ENCODE measurements at regions of chr10 and their contacts with region 1.

Region 1: GRCh38 chr10:5813287-5814109 is at the start of gene GDI2:
- DNase-seq: peak; percentile 96 to 97
- ATAC-seq: peak; percentile 91 to 99 (median 94)
- H3K4me3 ChIP-seq: peak within 1 kb of the TSS; percentile 96
- H3K4me3 Mint-ChIP-seq: peak within 1 kb of the TSS; percentile 88
- H3K27ac ChIP-seq: peak within 1 kb of the TSS; percentile 86
- H3K27ac Mint-ChIP-seq: peak within 1 kb of the TSS; percentile 82 to 84
- H3K4me1 ChIP-seq: peaks cover 37% of the 10 kb centered on the region
- H3K4me1 Mint-ChIP-seq: peaks cover 44 to 47% of the 10 kb centered on the region in 2 donors
- H3K27me3 ChIP-seq: no peaks in the 10 kb centered on the region
- H3K27me3 Mint-ChIP-seq: no peaks in the 10 kb centered on the region
- CTCF ChIP-seq: no peak
- total RNA-seq, gene GDI2: 97.9 to 104 (median 104) TPM

Region 2: DNA sequence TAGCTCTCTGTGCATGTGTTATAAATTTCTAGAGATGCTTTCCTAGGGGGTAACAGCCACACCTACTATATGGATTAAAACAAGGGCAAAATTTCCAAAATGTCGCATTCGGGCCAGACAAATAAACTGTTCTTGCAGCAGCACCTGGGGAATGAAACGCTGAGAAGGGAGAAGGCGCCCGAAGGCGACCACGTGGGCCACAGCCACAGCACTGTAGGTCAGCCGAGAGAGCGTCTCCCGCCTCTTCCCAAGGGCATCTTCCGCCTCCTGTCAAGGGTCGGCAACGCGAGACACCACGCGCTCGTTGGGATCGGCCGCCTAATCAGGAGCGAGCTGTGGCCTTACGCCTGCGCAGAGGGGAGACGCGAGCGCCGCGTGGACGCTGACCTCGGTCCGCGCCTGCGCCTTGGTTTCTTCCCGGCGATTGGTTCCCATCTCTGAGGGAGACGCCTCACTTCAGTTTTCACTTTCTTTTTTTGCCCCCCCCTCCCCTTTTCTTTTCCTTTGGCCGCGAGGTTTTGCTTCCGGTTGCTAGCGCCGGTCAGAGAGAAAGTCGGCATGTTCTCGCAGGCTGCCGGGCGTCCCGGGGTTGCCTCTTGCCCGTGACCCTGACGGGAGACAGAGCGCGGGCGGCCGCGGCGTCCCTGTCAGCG is 129.1 kb before region 1 on chr10 and contains the start of gene TASOR2:
- intact Hi-C with region 1: loop called (anchors 1 kb)
- DNase-seq: peak; percentile 92 to 98
- ATAC-seq: peak; percentile 80 to 91 (median 86)
- H3K4me3 ChIP-seq: peak within 1 kb of the TSS; percentile 53
- H3K4me3 Mint-ChIP-seq: peak within 1 kb of the TSS; percentile 97
- H3K27ac ChIP-seq: peak within 1 kb of the TSS; percentile 82
- H3K27ac Mint-ChIP-seq: peak within 1 kb of the TSS; percentile 95 to 99
- H3K4me1 ChIP-seq: peaks cover 6% of the 10 kb centered on the region
- H3K4me1 Mint-ChIP-seq: peaks cover 33 to 36% of the 10 kb centered on the region in 2 donors
- H3K27me3 ChIP-seq: no peaks in the 10 kb centered on the region
- H3K27me3 Mint-ChIP-seq: peaks cover under 1 to 12% of the 10 kb centered on the region in 2 donors
- CTCF ChIP-seq: no peak
- total RNA-seq, gene TASOR2: 64.4 to 88.7 (median 66.4) TPM

Region 3: GRCh38 chr10:5840314-5841307 is 27.1 kb after region 1 on chr10:
- intact Hi-C with region 1: no loop called
- DNase-seq: no peak
- ATAC-seq: peak in 2 of 3 donors; percentile 35 to 43
- H3K4me3 ChIP-seq: peak overlapping the region; percentile 29
- H3K4me3 Mint-ChIP-seq: no peak overlapping the region
- H3K27ac ChIP-seq: peak overlapping the region; percentile 78
- H3K27ac Mint-ChIP-seq: no peak overlapping the region
- H3K4me1 ChIP-seq: peaks cover 9% of the 10 kb centered on the region
- H3K4me1 Mint-ChIP-seq: no peaks in the 10 kb centered on the region
- H3K27me3 ChIP-seq: no peaks in the 10 kb centered on the region
- H3K27me3 Mint-ChIP-seq: peaks cover 0 to 11% of the 10 kb centered on the region in 2 donors
- CTCF ChIP-seq: no peak

Region 4: GRCh38 chr10:5873515-5873995 is 60.1 kb after region 1 on chr10:
- intact Hi-C with region 1: loop called (anchors 5 kb)
- DNase-seq: peak; percentile 56 to 82
- ATAC-seq: peak; percentile 89 to 100 (median 99)
- H3K4me3 ChIP-seq: no peak overlapping the region
- H3K4me3 Mint-ChIP-seq: peak overlapping the region; percentile 79
- H3K27ac ChIP-seq: peak overlapping the region; percentile 61
- H3K27ac Mint-ChIP-seq: peak overlapping the region in 1 of 2 donors; percentile 25
- H3K4me1 ChIP-seq: no peaks in the 10 kb centered on the region
- H3K4me1 Mint-ChIP-seq: peaks cover 7 to 8% of the 10 kb centered on the region in 2 donors
- H3K27me3 ChIP-seq: no peaks in the 10 kb centered on the region
- H3K27me3 Mint-ChIP-seq: no peaks in the 10 kb centered on the region
- CTCF ChIP-seq: peak; percentile 76

Region 5: DNA sequence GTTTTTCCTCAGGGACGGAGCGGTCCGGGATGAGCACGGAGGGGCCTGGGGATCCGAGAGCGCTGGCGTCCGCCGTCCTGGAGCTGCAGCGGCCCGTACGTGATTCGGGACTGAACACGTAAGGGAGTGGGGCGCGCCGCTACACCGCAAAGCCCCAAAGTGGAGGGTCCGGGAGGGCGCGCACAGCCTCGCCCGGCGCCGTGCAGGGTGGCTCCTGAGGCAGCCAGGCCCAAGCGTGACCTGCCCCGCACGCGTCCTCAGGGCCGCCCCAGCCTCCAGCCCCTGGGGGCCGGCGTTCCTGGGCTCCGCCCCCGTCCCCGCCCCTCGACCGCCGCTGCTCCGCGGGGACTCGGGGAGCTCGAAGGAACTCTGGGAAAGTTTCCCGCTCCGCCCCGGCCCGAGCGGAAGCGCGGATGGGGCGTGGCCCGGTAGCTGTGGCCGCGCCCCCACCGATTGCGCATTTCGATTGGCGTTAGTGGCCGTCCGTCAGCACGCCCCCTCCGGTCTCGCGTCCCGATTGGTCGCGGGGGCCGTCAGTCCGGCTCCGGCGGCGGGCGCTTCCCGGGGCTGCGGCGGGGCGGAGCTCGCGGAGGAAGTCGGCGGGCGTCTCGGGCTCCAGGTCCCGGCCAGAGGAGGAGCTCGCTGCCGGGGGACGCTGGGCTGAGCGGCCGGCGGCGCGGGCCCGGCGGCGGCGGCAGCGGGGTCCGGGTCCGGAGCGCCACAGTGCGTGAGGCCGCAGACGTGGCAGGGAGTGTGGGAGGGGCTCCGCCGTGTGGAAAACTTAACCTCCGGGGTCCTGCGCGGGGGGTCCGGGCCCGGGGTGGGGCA is 76.3 kb after region 1 on chr10 and contains the starts of genes ANKRD16 and FBH1:
- intact Hi-C with region 1: loop called (anchors 2 kb)
- DNase-seq: peak; percentile 99
- ATAC-seq: peak; percentile 89 to 95 (median 89)
- H3K4me3 ChIP-seq: peak within 1 kb of the TSS; percentile 86
- H3K4me3 Mint-ChIP-seq: peak within 1 kb of the TSS; percentile 93
- H3K27ac ChIP-seq: peak within 1 kb of the TSS; percentile 58
- H3K27ac Mint-ChIP-seq: peak within 1 kb of the TSS; percentile 74 to 92
- H3K4me1 ChIP-seq: peaks cover 25% of the 10 kb centered on the region
- H3K4me1 Mint-ChIP-seq: peaks cover 29 to 42% of the 10 kb centered on the region in 2 donors
- H3K27me3 ChIP-seq: no peaks in the 10 kb centered on the region
- H3K27me3 Mint-ChIP-seq: no peaks in the 10 kb centered on the region
- CTCF ChIP-seq: no peak
- total RNA-seq, gene ANKRD16: 2.6 to 3.1 (median 3.0) TPM
- total RNA-seq, gene FBH1: 49.3 to 64.9 (median 62.7) TPM

Region 6: GRCh38 chr10:5904227-5904626 is 90.7 kb after region 1 on chr10:
- intact Hi-C with region 1: no loop called
- DNase-seq: no peak
- ATAC-seq: no peak
- H3K4me3 ChIP-seq: no peak overlapping the region
- H3K4me3 Mint-ChIP-seq: no peak overlapping the region
- H3K27ac ChIP-seq: no peak overlapping the region
- H3K27ac Mint-ChIP-seq: no peak overlapping the region
- H3K4me1 ChIP-seq: no peaks in the 10 kb centered on the region
- H3K4me1 Mint-ChIP-seq: peaks cover 6 to 10% of the 10 kb centered on the region in 2 donors
- H3K27me3 ChIP-seq: no peaks in the 10 kb centered on the region
- H3K27me3 Mint-ChIP-seq: no peaks in the 10 kb centered on the region
- CTCF ChIP-seq: no peak

Region 7: GRCh38 chr10:5977471-5978229 is 164.2 kb after region 1 on chr10 and contains the start of gene IL15RA:
- intact Hi-C with region 1: loop called (anchors 5 kb)
- DNase-seq: peak; percentile 82 to 90
- ATAC-seq: peak; percentile 77 to 88 (median 82)
- H3K4me3 ChIP-seq: peak within 1 kb of the TSS; percentile 97
- H3K4me3 Mint-ChIP-seq: peak within 1 kb of the TSS; percentile 94
- H3K27ac ChIP-seq: peak within 1 kb of the TSS; percentile 89
- H3K27ac Mint-ChIP-seq: peak within 1 kb of the TSS; percentile 84 to 89
- H3K4me1 ChIP-seq: peaks cover 22% of the 10 kb centered on the region
- H3K4me1 Mint-ChIP-seq: peaks cover 23 to 24% of the 10 kb centered on the region in 2 donors
- H3K27me3 ChIP-seq: no peaks in the 10 kb centered on the region
- H3K27me3 Mint-ChIP-seq: no peaks in the 10 kb centered on the region
- CTCF ChIP-seq: no peak
- total RNA-seq, gene IL15RA: 10.7 to 11.8 (median 11.3) TPM